Naive thymus-derived CD4-positive, alpha-beta T cell (primary cell): ENCODE measurements at regions of chr10 and their contacts with region 1.

Region 1: DNA sequence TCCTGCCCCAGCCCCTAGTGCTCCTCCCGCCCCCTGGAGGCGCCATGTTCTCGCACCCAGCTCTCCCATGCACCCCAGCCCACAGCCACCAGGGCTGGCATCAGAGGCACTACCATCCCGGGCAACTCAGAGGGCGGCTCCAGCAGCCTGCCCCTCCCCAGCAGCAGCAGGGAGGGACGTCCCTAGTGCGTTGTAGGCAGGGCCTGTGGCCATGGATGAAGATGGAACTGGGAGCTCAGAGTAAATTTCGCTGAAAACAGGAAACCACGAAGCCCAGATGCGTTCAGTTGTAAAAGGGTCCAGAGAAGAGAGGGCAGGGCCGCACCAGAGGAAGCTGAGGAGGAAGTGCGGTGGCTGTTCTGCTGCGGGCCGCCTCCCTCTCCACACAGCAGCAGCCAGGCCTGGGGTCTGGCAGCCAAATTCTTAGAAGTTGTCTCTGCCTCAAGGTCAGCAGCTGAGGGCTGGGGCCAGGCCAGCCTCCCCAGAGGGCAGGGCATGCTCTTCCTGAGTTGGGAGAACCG is 24.6 kb downstream of the VSIR start:
- DNase-seq: peak; percentile 53 to 93 (median 88)
- ATAC-seq: peak; percentile 87
- H3K4me3 ChIP-seq: peak overlapping the region; percentile 40
- H3K4me3 Mint-ChIP-seq: peak overlapping the region; percentile 74 to 90 (median 85)
- H3K27ac ChIP-seq: peak overlapping the region; percentile 74
- H3K27ac Mint-ChIP-seq: peak overlapping the region; percentile 95 to 99 (median 98)
- H3K4me1 ChIP-seq: peaks cover 93 to 99% of the 10 kb centered on the region in 2 donors
- H3K4me1 Mint-ChIP-seq: peaks cover 80 to 98% (median 93%) of the 10 kb centered on the region in 7 donors
- H3K27me3 ChIP-seq: no peaks in the 10 kb centered on the region
- H3K27me3 Mint-ChIP-seq: no peaks in the 10 kb centered on the region

Region 2: GRCh38 chr10:70982443-70982842 is 766.3 kb before region 1 on chr10:
- CTCF ChIA-PET with region 1: no interaction called
- POLR2A ChIA-PET with region 1: no interaction called
- intact Hi-C with region 1: no loop called
- DNase-seq: no peak
- ATAC-seq: peak; percentile 58
- H3K4me3 ChIP-seq: no peak overlapping the region
- H3K4me3 Mint-ChIP-seq: peak overlapping the region in 7 of 10 donors; percentile 16 to 66 (median 37)
- H3K27ac ChIP-seq: no peak overlapping the region
- H3K27ac Mint-ChIP-seq: peak overlapping the region in 5 of 9 donors; percentile 17 to 82 (median 49)
- H3K4me1 ChIP-seq: peaks cover 0 to 9% of the 10 kb centered on the region in 2 donors
- H3K4me1 Mint-ChIP-seq: peaks cover 0 to 23% (median 12%) of the 10 kb centered on the region in 7 donors
- H3K27me3 ChIP-seq: no peaks in the 10 kb centered on the region
- H3K27me3 Mint-ChIP-seq: peaks cover 0 to 6% (median 0%) of the 10 kb centered on the region in 5 donors

Region 3: DNA sequence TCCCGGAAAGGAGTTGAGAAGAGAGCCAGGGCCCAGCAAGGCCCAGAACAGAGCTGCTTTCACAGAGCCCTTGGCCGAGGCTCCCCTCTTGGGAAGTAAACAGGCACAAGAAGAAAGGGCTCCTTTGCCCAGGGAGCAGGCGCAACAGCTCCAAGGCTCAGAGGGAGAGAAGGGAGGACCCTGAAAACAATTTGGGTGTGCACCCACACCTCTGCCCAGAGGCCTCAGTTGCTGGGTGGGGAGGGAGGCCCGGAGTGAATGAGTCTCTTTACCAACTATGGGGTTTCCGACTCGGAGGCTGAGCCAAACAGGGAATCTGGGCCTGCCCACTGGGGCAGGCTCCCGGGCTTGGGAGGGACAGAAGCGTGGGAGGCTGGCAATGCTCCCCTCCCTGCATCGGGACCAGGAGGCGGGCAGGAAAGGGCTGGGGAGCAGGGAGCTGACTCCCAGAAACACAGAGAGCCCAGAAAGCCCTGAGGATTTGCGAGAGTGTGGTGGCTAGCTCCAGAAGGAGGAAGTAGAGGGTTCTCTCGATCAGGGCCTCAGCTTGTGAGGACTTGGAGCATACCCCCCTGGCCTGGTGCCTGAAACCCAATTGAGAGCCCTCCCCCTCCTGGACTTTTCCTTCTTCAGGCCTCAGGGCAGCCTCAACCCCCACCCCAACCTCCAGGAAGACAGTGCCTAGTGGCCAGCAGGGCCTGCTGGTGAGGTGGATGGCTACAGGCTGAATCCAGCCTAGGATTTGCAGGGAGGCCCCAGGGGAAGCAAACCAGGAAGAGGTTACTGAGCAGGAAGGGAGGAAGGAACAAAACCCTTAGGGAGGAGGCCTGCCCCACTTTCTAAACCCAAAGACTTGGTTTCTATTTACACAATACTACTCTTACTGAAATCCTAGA is 35.3 kb before region 1 on chr10:
- CTCF ChIA-PET with region 1: interaction called, 13 read pairs
- POLR2A ChIA-PET with region 1: interaction called, 521 read pairs
- intact Hi-C with region 1: loop called (anchors 5 kb)
- DNase-seq: peak in 2 of 9 donors; percentile 40 to 41
- ATAC-seq: peak; percentile 47
- H3K4me3 ChIP-seq: peak overlapping the region; percentile 9
- H3K4me3 Mint-ChIP-seq: peak overlapping the region; percentile 73 to 86 (median 81)
- H3K27ac ChIP-seq: peak overlapping the region; percentile 91
- H3K27ac Mint-ChIP-seq: peak overlapping the region; percentile 97 to 100 (median 98)
- H3K4me1 ChIP-seq: peaks cover 45 to 63% of the 10 kb centered on the region in 2 donors
- H3K4me1 Mint-ChIP-seq: peaks cover 41 to 86% (median 73%) of the 10 kb centered on the region in 7 donors
- H3K27me3 ChIP-seq: no peaks in the 10 kb centered on the region
- H3K27me3 Mint-ChIP-seq: no peaks in the 10 kb centered on the region

Region 4: GRCh38 chr10:71766702-71767419 is 18.1 kb after region 1 on chr10:
- CTCF ChIA-PET with region 1: interaction called, 34 read pairs
- POLR2A ChIA-PET with region 1: interaction called, 863 read pairs
- intact Hi-C with region 1: loop called (anchors 1 kb)
- DNase-seq: no peak
- ATAC-seq: peak; percentile 36
- H3K4me3 ChIP-seq: no peak overlapping the region
- H3K4me3 Mint-ChIP-seq: peak overlapping the region; percentile 25 to 98 (median 71)
- H3K27ac ChIP-seq: peak overlapping the region; percentile 93
- H3K27ac Mint-ChIP-seq: peak overlapping the region; percentile 89 to 98 (median 95)
- H3K4me1 ChIP-seq: peaks cover 89 to 90% of the 10 kb centered on the region in 2 donors
- H3K4me1 Mint-ChIP-seq: peaks cover 71 to 96% (median 91%) of the 10 kb centered on the region in 7 donors
- H3K27me3 ChIP-seq: no peaks in the 10 kb centered on the region
- H3K27me3 Mint-ChIP-seq: no peaks in the 10 kb centered on the region